Adrenal gland (tissue), 19 donors: ENCODE measurements at regions of chr14 and their contacts with region 1.

Region 1: GRCh38 chr14:78566026-78566858 is 396.1 kb downstream of the NRXN3 start:
- DNase-seq: peak; percentile 68 to 92 (median 79)
- H3K4me3 ChIP-seq: peak overlapping the region in 1 of 4 donors; percentile 36
- H3K27ac ChIP-seq: no peak overlapping the region
- H3K4me1 ChIP-seq: no peaks in the 10 kb centered on the region
- H3K27me3 ChIP-seq: no peaks in the 10 kb centered on the region
- CTCF ChIP-seq: peak; percentile 45 to 76 (median 70)
- POLR2A ChIP-seq: no peak

Region 2: DNA sequence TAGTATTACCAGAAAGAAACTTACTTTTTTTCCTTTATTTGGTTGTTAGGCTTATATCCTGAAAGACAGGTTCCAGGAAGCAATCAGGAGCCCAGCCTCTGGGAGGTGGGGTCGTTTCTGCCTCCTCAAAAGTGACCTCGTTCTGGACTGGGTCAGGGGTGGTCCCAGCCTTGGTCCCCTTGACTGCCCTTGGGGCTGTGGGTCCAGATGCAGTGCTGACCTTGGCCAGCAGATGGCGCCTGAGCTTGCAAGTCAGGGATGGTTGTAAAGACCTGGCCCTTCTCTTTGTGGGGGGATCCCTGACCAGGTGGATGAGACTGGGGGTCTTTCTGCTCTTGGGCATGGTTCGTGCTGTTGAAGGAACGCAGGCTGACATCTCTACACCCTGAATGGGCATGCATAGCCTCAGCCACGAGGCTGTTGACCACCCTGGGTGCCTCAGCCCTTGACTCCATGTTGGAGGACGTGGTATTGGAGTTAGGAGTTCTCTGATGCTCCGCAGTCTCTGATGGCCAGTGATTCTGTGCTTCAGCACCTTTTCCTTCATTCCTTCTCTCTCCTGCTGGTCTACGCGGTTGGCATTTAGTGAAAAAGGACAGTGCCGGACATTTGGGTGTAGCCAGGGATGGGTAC is 704.0 kb before region 1 on chr14:
- intact Hi-C with region 1: loop called in 1 of 2 experiments (anchors 10 kb)
- DNase-seq: peak; percentile 56 to 88 (median 74)
- H3K4me3 ChIP-seq: no peak overlapping the region
- H3K27ac ChIP-seq: no peak overlapping the region
- H3K4me1 ChIP-seq: no peaks in the 10 kb centered on the region
- H3K27me3 ChIP-seq: no peaks in the 10 kb centered on the region
- CTCF ChIP-seq: peak; percentile 75 to 93 (median 84)
- POLR2A ChIP-seq: no peak

Region 3: DNA sequence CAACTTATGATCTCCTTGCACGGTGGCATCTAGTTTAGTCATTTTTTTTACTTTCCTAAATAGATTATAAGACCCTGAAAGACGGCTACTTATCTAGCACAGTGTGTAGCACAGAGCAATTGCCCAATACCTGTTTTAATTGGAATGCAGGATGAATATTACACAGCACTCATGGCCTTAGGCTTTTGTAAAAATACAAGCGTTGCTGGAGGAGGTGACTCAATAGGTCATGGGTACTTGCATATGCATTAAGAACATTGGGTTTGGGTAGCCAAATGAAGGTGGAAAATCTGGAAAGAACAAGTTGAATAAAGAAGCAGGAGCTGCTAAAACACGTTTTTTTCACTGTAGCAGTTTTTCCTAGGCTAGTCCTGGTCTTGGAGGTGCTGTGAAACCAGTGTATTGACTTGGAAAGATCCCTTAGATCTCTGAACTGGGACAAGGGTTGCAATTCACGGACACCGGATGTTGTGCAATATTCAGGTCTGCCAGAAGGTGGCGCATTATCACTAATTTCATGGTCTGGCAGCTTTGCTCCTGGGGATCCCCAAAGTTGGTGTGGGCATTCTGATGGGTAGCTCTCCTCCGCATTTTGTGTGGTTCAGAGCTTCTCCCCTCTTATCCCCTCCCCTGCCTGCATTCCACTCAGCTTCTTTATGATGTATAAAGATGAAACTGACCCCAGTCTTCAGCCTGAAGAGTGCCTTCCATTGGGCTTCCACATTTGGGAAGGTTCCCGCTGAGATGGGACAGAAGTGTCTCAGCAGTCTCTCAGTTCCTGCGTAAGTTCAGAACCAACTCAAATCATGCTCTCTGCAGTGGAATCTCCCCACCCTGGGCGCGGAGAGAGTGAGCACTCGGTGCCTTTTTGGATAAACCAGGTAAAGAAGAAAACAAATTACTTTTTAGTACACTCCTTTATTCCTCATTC is 117.8 kb before region 1 on chr14:
- intact Hi-C with region 1: loop called in 1 of 2 experiments (anchors 2 kb)
- DNase-seq: peak; percentile 16 to 83 (median 47)
- H3K4me3 ChIP-seq: no peak overlapping the region
- H3K27ac ChIP-seq: no peak overlapping the region
- H3K4me1 ChIP-seq: no peaks in the 10 kb centered on the region
- H3K27me3 ChIP-seq: no peaks in the 10 kb centered on the region
- CTCF ChIP-seq: peak; percentile 39 to 66 (median 62)
- POLR2A ChIP-seq: no peak